ENCODE measurements at regions of chr3 and their contacts with region 1.

Region 1: GRCh38 chr3:71064288-71064955 is 519.1 kb downstream of the FOXP1 start:
- DNase-seq: peak; percentile 88
- ATAC-seq: peak; percentile 45
- H3K4me3 ChIP-seq: peak overlapping the region; percentile 62 to 94 (median 76)
- H3K4me3 Mint-ChIP-seq: no peak overlapping the region
- H3K27ac ChIP-seq: peak overlapping the region; percentile 83 to 91
- H3K27ac Mint-ChIP-seq: no peak overlapping the region
- H3K4me1 ChIP-seq: peaks cover 56 to 76% of the 10 kb centered on the region in 2 donors
- H3K4me1 Mint-ChIP-seq: peaks cover 65% of the 10 kb centered on the region
- H3K27me3 ChIP-seq: no peaks in the 10 kb centered on the region
- H3K27me3 Mint-ChIP-seq: no peaks in the 10 kb centered on the region
- CTCF ChIP-seq: no peak

Region 2: GRCh38 chr3:71006810-71007785 is 57.3 kb before region 1 on chr3:
- CTCF ChIA-PET with region 1: interaction called, 64 read pairs
- POLR2A ChIA-PET with region 1: interaction called, 6 read pairs
- intact Hi-C with region 1: loop called (anchors 1 kb)
- DNase-seq: peak; percentile 69
- ATAC-seq: no peak
- H3K4me3 ChIP-seq: no peak overlapping the region
- H3K4me3 Mint-ChIP-seq: no peak overlapping the region
- H3K27ac ChIP-seq: peak overlapping the region in 1 of 2 donors; percentile 98
- H3K27ac Mint-ChIP-seq: peak overlapping the region; percentile 87
- H3K4me1 ChIP-seq: peaks cover 47 to 54% of the 10 kb centered on the region in 2 donors
- H3K4me1 Mint-ChIP-seq: peaks cover 64% of the 10 kb centered on the region
- H3K27me3 ChIP-seq: no peaks in the 10 kb centered on the region
- H3K27me3 Mint-ChIP-seq: no peaks in the 10 kb centered on the region
- CTCF ChIP-seq: peak; percentile 77

Region 3: GRCh38 chr3:71045917-71046282 is 18.5 kb before region 1 on chr3:
- CTCF ChIA-PET with region 1: interaction called, 4 read pairs
- POLR2A ChIA-PET with region 1: interaction called, 4 read pairs
- intact Hi-C with region 1: loop called (anchors 1 kb)
- DNase-seq: no peak
- ATAC-seq: peak; percentile 54
- H3K4me3 ChIP-seq: peak overlapping the region in 2 of 5 experiments; percentile 15 to 25
- H3K4me3 Mint-ChIP-seq: peak overlapping the region; percentile 66
- H3K27ac ChIP-seq: peak overlapping the region; percentile 84 to 89
- H3K27ac Mint-ChIP-seq: peak overlapping the region; percentile 84
- H3K4me1 ChIP-seq: peaks cover 64 to 69% of the 10 kb centered on the region in 2 donors
- H3K4me1 Mint-ChIP-seq: peaks cover 82% of the 10 kb centered on the region
- H3K27me3 ChIP-seq: no peaks in the 10 kb centered on the region
- H3K27me3 Mint-ChIP-seq: no peaks in the 10 kb centered on the region
- CTCF ChIP-seq: no peak

Region 4: DNA sequence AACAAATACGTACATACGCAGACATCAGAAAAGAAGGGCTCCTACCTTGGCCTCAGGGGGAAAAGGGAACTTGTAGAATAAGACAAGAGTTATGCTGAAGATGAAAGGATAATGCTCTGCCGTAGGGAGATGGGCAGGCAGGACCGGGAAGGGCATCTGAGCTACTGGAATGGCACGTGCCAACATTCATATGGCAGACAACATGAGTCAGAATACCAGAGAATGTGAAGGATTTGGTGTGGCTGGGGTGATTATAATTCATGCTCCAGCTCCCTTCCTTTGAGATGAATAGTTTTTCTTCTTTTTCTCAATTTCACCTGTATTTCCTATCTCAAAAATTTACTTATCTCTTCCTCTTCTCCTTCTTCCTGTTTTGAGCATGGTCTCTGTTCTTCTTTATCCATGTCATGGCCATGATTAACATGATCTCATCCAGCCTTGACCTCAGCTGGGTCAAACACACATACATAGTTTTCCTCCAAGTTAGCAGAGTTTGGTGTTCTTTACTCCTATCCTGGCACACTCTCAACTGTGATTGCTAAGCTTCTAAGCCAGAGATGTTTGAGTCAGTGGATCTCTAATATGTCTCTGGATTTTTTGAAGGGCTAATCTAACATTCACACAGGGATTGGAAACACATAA is 12.1 kb after region 1 on chr3:
- CTCF ChIA-PET with region 1: interaction called, 15 read pairs
- POLR2A ChIA-PET with region 1: no interaction called
- intact Hi-C with region 1: no loop called
- DNase-seq: no peak
- ATAC-seq: no peak
- H3K4me3 ChIP-seq: no peak overlapping the region
- H3K4me3 Mint-ChIP-seq: peak overlapping the region; percentile 29
- H3K27ac ChIP-seq: peak overlapping the region in 1 of 2 donors; percentile 54
- H3K27ac Mint-ChIP-seq: peak overlapping the region; percentile 80
- H3K4me1 ChIP-seq: peaks cover 56 to 67% of the 10 kb centered on the region in 2 donors
- H3K4me1 Mint-ChIP-seq: peaks cover 85% of the 10 kb centered on the region
- H3K27me3 ChIP-seq: no peaks in the 10 kb centered on the region
- H3K27me3 Mint-ChIP-seq: no peaks in the 10 kb centered on the region
- CTCF ChIP-seq: no peak

Region 5: DNA sequence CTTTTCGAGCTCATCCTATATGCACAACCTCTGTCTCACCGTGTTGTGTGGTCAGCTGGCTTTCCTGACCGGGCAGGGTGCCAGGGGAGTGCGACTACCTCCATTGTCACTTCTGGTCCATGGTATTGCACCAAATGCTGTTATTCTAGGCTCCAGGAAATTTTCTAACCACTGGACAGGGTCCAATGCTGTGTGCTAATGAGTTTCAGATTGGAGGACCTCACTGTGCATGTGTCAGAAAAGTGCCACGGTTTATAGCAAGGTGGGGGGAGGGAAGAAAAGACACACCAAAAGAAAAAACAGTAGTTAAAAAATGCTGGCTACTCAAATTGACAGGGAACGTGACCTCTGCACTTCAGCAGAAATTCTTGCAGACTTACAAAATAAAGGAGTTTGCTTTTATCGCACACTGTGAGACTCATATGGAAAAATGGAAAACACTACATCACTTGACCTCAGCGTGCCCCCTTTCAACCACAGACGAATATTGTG is 39.1 kb after region 1 on chr3:
- CTCF ChIA-PET with region 1: no interaction called
- POLR2A ChIA-PET with region 1: no interaction called
- intact Hi-C with region 1: no loop called
- DNase-seq: no peak
- ATAC-seq: no peak
- H3K4me3 ChIP-seq: no peak overlapping the region
- H3K4me3 Mint-ChIP-seq: no peak overlapping the region
- H3K27ac ChIP-seq: peak overlapping the region in 1 of 2 donors; percentile 51
- H3K27ac Mint-ChIP-seq: peak overlapping the region; percentile 69
- H3K4me1 ChIP-seq: peaks cover 24 to 28% of the 10 kb centered on the region in 2 donors
- H3K4me1 Mint-ChIP-seq: peaks cover 83% of the 10 kb centered on the region
- H3K27me3 ChIP-seq: no peaks in the 10 kb centered on the region
- H3K27me3 Mint-ChIP-seq: no peaks in the 10 kb centered on the region
- CTCF ChIP-seq: no peak

Region 6: GRCh38 chr3:71130471-71131374 is 66.3 kb after region 1 on chr3:
- CTCF ChIA-PET with region 1: interaction called, 13 read pairs
- POLR2A ChIA-PET with region 1: interaction called, 3 read pairs
- intact Hi-C with region 1: loop called (anchors 1 kb)
- DNase-seq: peak; percentile 81
- ATAC-seq: peak; percentile 76
- H3K4me3 ChIP-seq: peak overlapping the region; percentile 53 to 91 (median 71)
- H3K4me3 Mint-ChIP-seq: peak overlapping the region; percentile 93
- H3K27ac ChIP-seq: peak overlapping the region; percentile 72 to 91
- H3K27ac Mint-ChIP-seq: peak overlapping the region; percentile 94
- H3K4me1 ChIP-seq: peaks cover 51 to 64% of the 10 kb centered on the region in 2 donors
- H3K4me1 Mint-ChIP-seq: peaks cover 68% of the 10 kb centered on the region
- H3K27me3 ChIP-seq: no peaks in the 10 kb centered on the region
- H3K27me3 Mint-ChIP-seq: no peaks in the 10 kb centered on the region
- CTCF ChIP-seq: no peak

Region 7: DNA sequence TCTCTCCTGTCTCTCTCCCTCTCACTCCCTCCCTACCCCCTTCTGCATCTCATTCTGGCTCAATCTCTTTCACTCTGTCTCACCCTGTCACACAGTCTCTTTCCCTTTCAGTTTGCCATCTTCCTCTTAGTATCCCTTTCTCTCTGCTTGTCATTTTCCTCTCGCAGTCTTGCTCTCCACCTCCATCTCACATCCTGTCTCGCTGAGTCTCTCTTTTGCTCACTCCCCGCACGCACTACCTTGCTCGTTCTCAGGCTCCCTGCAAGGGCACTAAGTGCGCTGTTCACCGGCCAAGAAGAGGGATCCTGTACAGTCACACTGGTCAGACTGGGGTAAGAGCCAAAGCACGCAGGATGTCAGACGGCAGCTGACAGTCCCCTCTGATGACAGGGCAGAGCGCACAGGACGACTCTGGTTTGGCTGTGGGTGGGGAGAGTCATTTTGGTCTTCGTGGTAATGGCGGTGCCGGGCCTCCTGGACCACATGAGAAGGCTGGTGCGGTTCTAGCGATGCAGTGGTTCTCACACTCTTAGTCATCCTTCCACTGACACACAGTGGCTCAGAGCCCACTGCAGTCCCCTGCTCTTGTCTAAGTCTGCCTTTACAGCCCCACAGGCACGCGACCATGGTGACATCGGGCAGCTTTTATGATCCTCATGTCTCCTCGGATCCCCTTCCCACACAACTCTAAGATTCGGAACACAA is 162.3 kb after region 1 on chr3:
- CTCF ChIA-PET with region 1: no interaction called
- POLR2A ChIA-PET with region 1: no interaction called
- intact Hi-C with region 1: loop called (anchors 2 kb)
- DNase-seq: peak; percentile 60
- ATAC-seq: peak; percentile 69
- H3K4me3 ChIP-seq: peak overlapping the region in 4 of 5 experiments; percentile 19 to 52 (median 40)
- H3K4me3 Mint-ChIP-seq: peak overlapping the region; percentile 91
- H3K27ac ChIP-seq: peak overlapping the region; percentile 67 to 93
- H3K27ac Mint-ChIP-seq: peak overlapping the region; percentile 90
- H3K4me1 ChIP-seq: peaks cover 32 to 34% of the 10 kb centered on the region in 2 donors
- H3K4me1 Mint-ChIP-seq: peaks cover 64% of the 10 kb centered on the region
- H3K27me3 ChIP-seq: no peaks in the 10 kb centered on the region
- H3K27me3 Mint-ChIP-seq: no peaks in the 10 kb centered on the region
- CTCF ChIP-seq: no peak

Region 8: DNA sequence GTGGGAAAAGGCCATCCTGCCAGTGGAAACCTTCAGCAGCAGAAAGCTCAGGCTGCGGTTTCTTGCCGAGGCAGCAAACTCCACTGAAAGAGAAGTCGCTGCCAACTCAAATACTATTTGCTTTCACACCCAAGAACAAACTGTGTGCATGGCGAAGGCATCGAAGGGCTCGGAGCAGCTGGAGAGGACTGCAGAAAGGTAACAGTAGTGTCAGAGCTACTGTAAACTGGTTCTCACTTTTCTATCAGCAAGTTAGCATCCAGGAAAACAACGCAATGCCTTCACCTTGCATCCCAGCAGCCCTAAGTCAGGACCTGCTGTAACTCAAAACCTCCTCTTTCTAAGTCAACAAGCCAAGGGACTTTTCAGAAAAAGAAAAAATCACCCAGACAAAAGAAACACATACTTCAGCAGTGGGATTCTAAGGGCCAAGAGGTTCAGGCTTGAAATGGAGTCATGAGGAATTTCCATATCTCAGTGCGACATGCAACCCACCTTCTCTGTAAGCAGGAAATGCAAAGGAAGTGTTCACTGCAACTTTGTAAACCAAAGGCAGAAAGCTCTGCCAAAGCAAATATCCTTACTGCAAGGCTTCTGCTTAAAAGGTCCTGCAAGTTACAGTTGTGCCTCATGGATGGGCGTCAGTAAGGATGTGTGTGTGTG is 325.6 kb after region 1 on chr3:
- CTCF ChIA-PET with region 1: interaction called, 3 read pairs
- POLR2A ChIA-PET with region 1: interaction called, 3 read pairs
- intact Hi-C with region 1: loop called (anchors 5 kb)
- DNase-seq: peak; percentile 57
- ATAC-seq: peak; percentile 11
- H3K4me3 ChIP-seq: peak overlapping the region; percentile 27 to 40 (median 33)
- H3K4me3 Mint-ChIP-seq: peak overlapping the region; percentile 84
- H3K27ac ChIP-seq: peak overlapping the region; percentile 95 to 99
- H3K27ac Mint-ChIP-seq: peak overlapping the region; percentile 98
- H3K4me1 ChIP-seq: peaks cover 84 to 90% of the 10 kb centered on the region in 2 donors
- H3K4me1 Mint-ChIP-seq: peaks cover 70% of the 10 kb centered on the region
- H3K27me3 ChIP-seq: no peaks in the 10 kb centered on the region
- H3K27me3 Mint-ChIP-seq: no peaks in the 10 kb centered on the region
- CTCF ChIP-seq: no peak

Measured in B cell (primary cell).